ENCODE measurements at regions of chr17 and their contacts with region 1.

Region 1: GRCh38 chr17:17823433-17824118 is 13.2 kb downstream of the SREBF1 start:
- DNase-seq: peak; percentile 82
- H3K4me3 Mint-ChIP-seq: peak overlapping the region; percentile 75
- H3K27ac Mint-ChIP-seq: peak overlapping the region; percentile 91
- H3K4me1 Mint-ChIP-seq: peaks cover 94% of the 10 kb centered on the region
- H3K27me3 Mint-ChIP-seq: no peaks in the 10 kb centered on the region

Region 2: GRCh38 chr17:17694169-17695081 is 129.2 kb before region 1 on chr17:
- CTCF ChIA-PET with region 1: no interaction called
- intact Hi-C with region 1: loop called (anchors 1 kb)
- DNase-seq: peak; percentile 80
- H3K4me3 Mint-ChIP-seq: peak overlapping the region; percentile 90
- H3K27ac Mint-ChIP-seq: peak overlapping the region; percentile 97
- H3K4me1 Mint-ChIP-seq: peaks cover 71% of the 10 kb centered on the region
- H3K27me3 Mint-ChIP-seq: no peaks in the 10 kb centered on the region

Region 3: GRCh38 chr17:17836250-17836817 is 12.8 kb after region 1 on chr17:
- CTCF ChIA-PET with region 1: interaction called, 8 read pairs
- intact Hi-C with region 1: loop called (anchors 1 kb)
- DNase-seq: peak; percentile 99
- H3K4me3 Mint-ChIP-seq: peak overlapping the region; percentile 91
- H3K27ac Mint-ChIP-seq: peak overlapping the region; percentile 98
- H3K4me1 Mint-ChIP-seq: peaks cover 72% of the 10 kb centered on the region
- H3K27me3 Mint-ChIP-seq: no peaks in the 10 kb centered on the region

Region 4: GRCh38 chr17:17859909-17860765 is 36.6 kb after region 1 on chr17:
- CTCF ChIA-PET with region 1: interaction called, 10 read pairs
- intact Hi-C with region 1: no loop called
- DNase-seq: peak; percentile 80
- H3K4me3 Mint-ChIP-seq: no peak overlapping the region
- H3K27ac Mint-ChIP-seq: no peak overlapping the region
- H3K4me1 Mint-ChIP-seq: peaks cover 26% of the 10 kb centered on the region
- H3K27me3 Mint-ChIP-seq: no peaks in the 10 kb centered on the region

Region 5: DNA sequence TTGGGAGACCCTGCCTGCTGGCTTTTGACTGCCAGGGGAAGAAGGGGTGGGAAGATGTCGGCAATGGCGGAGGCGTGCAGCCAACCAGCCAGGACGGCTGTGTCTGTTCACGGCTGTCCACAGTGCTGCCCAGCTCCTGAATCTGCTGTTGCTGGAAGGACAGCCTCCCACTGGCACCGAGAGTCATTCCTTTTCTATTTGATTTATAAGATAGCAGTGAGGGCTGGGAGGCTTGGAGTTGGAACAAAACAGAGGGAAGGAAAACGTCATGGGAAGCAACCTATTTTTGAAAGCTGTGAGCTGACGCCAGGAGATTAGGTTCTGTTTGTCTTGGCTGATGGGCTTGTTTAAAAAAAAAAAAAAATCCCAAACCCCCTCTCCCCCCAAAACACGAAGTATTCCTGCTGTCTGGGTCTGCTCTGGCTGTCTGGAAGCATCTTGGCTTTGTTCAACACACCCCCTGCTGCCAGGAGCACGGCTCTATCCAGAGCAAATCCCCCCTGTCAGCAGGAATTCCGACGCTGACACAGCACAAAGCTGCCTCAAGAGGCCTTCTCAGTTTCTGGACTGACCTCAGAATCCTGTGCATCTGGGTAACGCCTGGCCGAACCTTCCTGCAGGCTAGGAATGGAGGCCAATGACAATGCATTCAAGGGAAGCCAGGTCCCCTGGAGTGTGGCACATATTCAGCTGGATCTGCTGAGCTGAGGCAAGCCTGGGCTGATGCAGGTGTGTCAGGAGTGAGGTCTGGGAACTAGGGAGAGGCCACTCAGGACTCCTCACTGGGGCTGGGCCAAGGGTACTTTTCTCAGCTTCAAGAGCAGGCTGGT is 54.2 kb after region 1 on chr17:
- CTCF ChIA-PET with region 1: no interaction called
- intact Hi-C with region 1: no loop called
- DNase-seq: no peak
- H3K4me3 Mint-ChIP-seq: no peak overlapping the region
- H3K27ac Mint-ChIP-seq: no peak overlapping the region
- H3K4me1 Mint-ChIP-seq: no peaks in the 10 kb centered on the region
- H3K27me3 Mint-ChIP-seq: no peaks in the 10 kb centered on the region

Region 6: GRCh38 chr17:17890773-17891759 is 67.5 kb after region 1 on chr17:
- CTCF ChIA-PET with region 1: no interaction called
- intact Hi-C with region 1: no loop called
- DNase-seq: peak; percentile 75
- H3K4me3 Mint-ChIP-seq: no peak overlapping the region
- H3K27ac Mint-ChIP-seq: no peak overlapping the region
- H3K4me1 Mint-ChIP-seq: peaks cover 2% of the 10 kb centered on the region
- H3K27me3 Mint-ChIP-seq: no peaks in the 10 kb centered on the region

Region 7: GRCh38 chr17:18038861-18039534 is 215.4 kb after region 1 on chr17 and contains the starts of genes ATPAF2 and GID4:
- CTCF ChIA-PET with region 1: no interaction called
- intact Hi-C with region 1: loop called (anchors 2 kb)
- DNase-seq: peak; percentile 100
- H3K4me3 Mint-ChIP-seq: peak within 1 kb of the TSS; percentile 86
- H3K27ac Mint-ChIP-seq: peak within 1 kb of the TSS; percentile 79
- H3K4me1 Mint-ChIP-seq: peaks cover 40% of the 10 kb centered on the region
- H3K27me3 Mint-ChIP-seq: no peaks in the 10 kb centered on the region
- total RNA-seq, gene ATPAF2: 24.7 to 25.7 TPM
- total RNA-seq, gene GID4: 5.2 to 6.0 TPM

Measured in activated naive CD4-positive, alpha-beta T cell treated with anti-CD3 and anti-CD28 coated beads for 36 hours (primary cell).